A673 (cell line): ENCODE measurements at regions of chr3 and their contacts with region 1.

Region 1: GRCh38 chr3:73848173-73848906 is 223.6 kb upstream of the PDZRN3 start:
- DNase-seq: peak; percentile 2
- H3K4me3 ChIP-seq: no peak overlapping the region
- H3K27ac ChIP-seq: no peak overlapping the region
- H3K4me1 ChIP-seq: no peaks in the 10 kb centered on the region
- H3K27me3 ChIP-seq: no peaks in the 10 kb centered on the region
- CTCF ChIP-seq: peak; percentile 56

Region 2: GRCh38 chr3:73508330-73508954 is 339.9 kb before region 1 on chr3:
- CTCF ChIA-PET with region 1: interaction called, 3 read pairs
- POLR2A ChIA-PET with region 1: no interaction called
- intact Hi-C with region 1: loop called (anchors 1 kb)
- DNase-seq: peak; percentile 65
- H3K4me3 ChIP-seq: no peak overlapping the region
- H3K27ac ChIP-seq: no peak overlapping the region
- H3K4me1 ChIP-seq: no peaks in the 10 kb centered on the region
- H3K27me3 ChIP-seq: no peaks in the 10 kb centered on the region
- CTCF ChIP-seq: peak; percentile 63

Region 3: GRCh38 chr3:73832426-73832825 is 15.9 kb before region 1 on chr3:
- CTCF ChIA-PET with region 1: no interaction called
- POLR2A ChIA-PET with region 1: no interaction called
- intact Hi-C with region 1: no loop called
- DNase-seq: no peak
- H3K4me3 ChIP-seq: no peak overlapping the region
- H3K27ac ChIP-seq: no peak overlapping the region
- H3K4me1 ChIP-seq: no peaks in the 10 kb centered on the region
- H3K27me3 ChIP-seq: no peaks in the 10 kb centered on the region
- CTCF ChIP-seq: no peak